Dorsolateral prefrontal cortex (tissue), 120 donors: ENCODE measurements at regions of chr1 and their contacts with region 1.

Region 1: DNA sequence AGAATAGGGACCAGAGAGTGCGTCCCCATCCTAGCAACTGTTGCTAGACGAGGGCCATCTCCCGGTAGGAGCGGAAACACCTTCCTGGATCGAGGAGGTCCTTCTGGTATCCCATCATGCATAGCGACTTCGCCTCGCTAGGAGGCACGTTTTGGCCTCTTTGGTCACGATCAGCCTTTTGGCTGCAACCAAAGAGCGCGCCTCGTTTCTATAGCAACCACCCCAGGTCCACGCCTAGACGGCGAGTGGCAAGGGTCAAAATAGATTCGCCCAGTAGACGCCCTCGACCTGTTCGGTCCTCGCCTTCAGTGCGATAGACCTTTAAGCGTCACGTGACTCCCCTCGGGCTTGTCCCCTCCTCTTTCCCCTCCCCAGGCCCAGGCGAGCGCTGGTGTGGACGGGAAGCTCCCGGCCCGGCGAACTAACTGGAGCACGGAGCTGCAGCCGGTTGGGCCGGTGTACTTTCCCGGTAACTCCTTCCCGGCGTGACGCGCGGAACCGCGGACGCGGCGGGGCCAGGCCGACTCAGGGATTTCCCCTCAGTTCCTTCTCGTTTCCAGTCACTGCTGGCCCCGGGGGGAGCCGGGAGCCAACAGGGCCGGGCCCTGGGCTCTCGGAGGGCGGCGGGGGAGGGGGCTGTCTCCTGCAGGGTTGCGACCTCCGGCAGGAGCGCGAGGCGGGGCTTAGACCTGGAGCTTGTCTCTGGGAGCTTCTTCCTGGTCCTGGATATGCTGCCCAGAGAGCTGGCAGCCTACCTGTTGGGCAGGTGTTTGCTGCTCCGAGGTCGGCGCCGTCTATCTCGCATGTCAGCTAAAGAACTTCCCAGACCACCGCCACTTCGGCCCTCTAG is at the start of gene DNAJC16:
- DNase-seq: peak; percentile 97 to 99 (median 99)
- H3K4me3 ChIP-seq: peak within 1 kb of the TSS; percentile 67 to 99 (median 89)
- H3K27ac ChIP-seq: peak within 1 kb of the TSS; percentile 81 to 100 (median 97)
- H3K27me3 ChIP-seq: no peaks in the 10 kb centered on the region
- CTCF ChIP-seq: peak in 50 of 56 donors; percentile 14 to 68 (median 44)
- total RNA-seq, gene DNAJC16: 25.1 to 54.7 (median 38.7) TPM

Region 2: DNA sequence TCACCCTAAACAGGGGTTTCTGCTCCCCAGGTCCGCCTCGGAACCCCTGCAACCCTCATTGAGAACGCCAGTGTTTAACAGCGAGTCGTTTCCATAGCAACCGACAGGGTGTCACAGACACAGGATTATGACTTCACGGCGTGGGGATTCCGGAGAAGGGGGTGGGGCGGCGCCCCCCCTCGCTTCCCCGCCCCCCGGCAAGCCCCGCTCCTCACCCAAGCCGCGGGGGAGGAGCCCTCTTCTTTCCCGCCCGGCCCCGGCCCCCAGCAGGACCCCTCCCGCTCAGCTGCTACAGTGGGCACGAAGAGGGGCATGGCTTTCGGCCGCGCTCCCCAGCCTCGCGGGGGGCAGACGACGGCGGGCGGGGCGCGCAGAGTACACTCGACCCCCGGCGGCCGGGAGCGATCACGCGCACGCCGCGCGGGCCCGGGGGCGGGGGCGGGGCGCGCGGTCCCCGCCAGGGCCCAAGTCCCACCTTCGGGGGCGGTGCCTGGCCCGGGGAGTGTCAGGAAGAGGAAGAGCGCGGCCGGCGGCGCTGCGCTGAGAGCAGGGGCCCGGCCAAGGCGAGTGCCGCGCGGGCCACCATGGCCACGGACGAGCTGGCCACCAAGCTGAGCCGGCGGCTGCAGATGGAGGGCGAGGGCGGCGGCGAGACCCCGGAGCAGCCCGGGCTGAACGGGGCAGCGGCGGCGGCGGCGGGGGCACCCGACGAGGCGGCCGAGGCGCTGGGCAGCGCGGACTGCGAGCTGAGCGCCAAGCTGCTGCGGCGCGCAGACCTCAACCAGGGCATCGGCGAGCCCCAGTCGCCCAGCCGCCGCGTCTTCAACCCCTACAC is 117.1 kb before region 1 on chr1 and contains the start of gene EFHD2:
- intact Hi-C with region 1: loop called in 1 of 2 experiments (anchors 10 kb)
- DNase-seq: peak in 6 of 10 donors; percentile 56 to 80 (median 72)
- H3K4me3 ChIP-seq: peak within 1 kb of the TSS; percentile 49 to 91 (median 78)
- H3K27ac ChIP-seq: peak within 1 kb of the TSS in 53 of 59 donors; percentile 14 to 91 (median 76)
- H3K27me3 ChIP-seq: no peaks in the 10 kb centered on the region
- CTCF ChIP-seq: peak in 5 of 56 donors; percentile 5 to 31 (median 25)
- total RNA-seq, gene EFHD2: 54.8 to 180 (median 104) TPM

Region 3: DNA sequence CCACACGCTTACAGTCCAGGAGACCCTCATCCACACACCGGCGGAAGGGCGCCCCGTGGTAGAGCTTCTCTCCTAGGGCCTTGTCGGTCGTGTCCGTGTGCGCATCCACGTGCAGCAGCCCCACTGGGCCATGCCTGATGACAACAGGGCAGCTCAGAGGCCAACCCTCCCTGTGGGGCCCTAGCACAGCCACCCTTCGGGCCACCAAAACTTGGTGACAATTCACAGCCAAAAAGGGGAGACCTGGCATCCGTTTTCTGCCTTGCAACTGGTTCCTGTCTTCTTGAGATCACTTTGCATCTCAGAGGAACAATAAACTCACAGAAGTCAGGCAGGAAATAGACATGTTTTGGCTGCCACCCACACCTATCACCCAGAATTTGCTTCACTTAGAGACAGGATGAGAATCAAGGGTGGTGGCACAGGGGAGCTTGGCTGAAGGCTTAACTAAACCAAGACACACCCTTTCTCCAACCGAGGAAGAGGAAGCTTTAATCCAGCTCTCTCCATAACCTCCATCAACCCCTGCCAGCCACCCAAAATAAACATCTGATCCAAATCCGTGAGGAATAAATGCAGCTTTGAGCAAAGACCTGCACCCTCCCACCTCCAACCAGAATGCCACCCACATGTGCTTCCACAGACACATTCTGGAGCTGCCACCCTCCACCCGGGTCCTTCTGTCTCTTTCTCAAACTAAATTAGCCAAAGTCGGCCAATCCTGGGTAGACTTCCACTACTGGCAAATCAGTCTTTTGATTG is 52.4 kb after region 1 on chr1:
- intact Hi-C with region 1: no loop called
- DNase-seq: peak in 5 of 10 donors; percentile 10 to 57 (median 49)
- H3K4me3 ChIP-seq: no peak overlapping the region
- H3K27ac ChIP-seq: peak overlapping the region in 46 of 59 donors; percentile 5 to 77 (median 52)
- H3K27me3 ChIP-seq: no peaks in the 10 kb centered on the region
- CTCF ChIP-seq: no peak

Region 4: DNA sequence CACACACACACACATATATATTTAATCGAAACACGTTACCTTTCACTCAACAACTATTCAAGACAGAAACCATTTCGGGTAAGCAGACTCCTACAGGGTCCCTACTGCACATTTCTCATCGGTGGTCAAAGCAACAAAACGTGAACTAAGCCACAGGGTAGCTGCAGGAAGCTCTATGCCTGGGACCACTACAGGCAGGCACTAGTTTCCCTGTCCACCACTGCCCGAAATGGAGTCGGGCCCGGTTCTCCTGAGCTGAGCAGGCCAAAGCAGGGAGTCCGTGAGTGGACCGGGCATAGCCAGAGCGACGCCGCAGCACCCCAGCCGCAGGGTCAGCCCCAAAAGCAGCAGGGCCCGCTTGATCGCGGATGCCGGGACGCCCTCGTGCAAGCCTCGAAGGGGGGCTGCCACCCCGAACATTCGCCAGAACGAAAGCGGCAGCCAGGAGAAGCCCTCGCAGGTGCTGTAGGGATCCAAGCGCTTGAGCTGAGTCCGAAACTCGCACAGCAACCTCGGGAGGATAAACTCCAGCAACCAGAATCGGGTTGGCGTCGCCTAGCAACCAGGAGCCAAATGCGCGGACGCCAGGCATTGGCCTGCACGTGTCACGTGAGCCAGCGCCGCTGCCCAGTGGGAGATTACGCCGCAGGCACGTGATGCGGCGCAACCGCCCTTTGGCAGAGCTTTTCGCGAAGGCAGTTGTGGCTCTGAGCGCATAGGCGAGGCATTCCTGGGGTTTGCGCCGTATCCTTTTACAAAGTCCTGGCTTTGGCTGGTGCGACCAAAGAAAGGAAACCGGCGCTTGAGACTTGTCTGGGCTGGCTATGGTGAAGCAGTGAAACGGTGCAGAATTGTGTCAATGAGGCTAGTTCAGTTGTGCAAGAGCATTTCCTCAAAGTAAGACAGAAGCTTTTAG is 76.6 kb after region 1 on chr1:
- intact Hi-C with region 1: loop called in 1 of 2 experiments (anchors 5 kb)
- DNase-seq: peak; percentile 97 to 98 (median 98)
- H3K4me3 ChIP-seq: peak overlapping the region; percentile 60 to 98 (median 87)
- H3K27ac ChIP-seq: peak overlapping the region in 58 of 59 donors; percentile 58 to 96 (median 86)
- H3K27me3 ChIP-seq: no peaks in the 10 kb centered on the region
- CTCF ChIP-seq: peak in 13 of 56 donors; percentile 1 to 38 (median 20)

Region 5: GRCh38 chr1:15617175-15617880 is 90.6 kb after region 1 on chr1 and contains the start of gene DDI2:
- intact Hi-C with region 1: loop called (anchors 2 to 5 kb)
- DNase-seq: peak; percentile 81 to 97 (median 92)
- H3K4me3 ChIP-seq: peak within 1 kb of the TSS; percentile 69 to 99 (median 94)
- H3K27ac ChIP-seq: peak within 1 kb of the TSS; percentile 49 to 97 (median 91)
- H3K27me3 ChIP-seq: no peaks in the 10 kb centered on the region
- CTCF ChIP-seq: peak in 20 of 56 donors; percentile 3 to 49 (median 16)
- total RNA-seq, gene DDI2: 28.6 to 49.9 (median 38.4) TPM

Region 6: GRCh38 chr1:15847100-15847892 is 320.6 kb after region 1 on chr1 and contains the start of gene SPEN:
- intact Hi-C with region 1: loop called in 1 of 2 experiments (anchors 5 kb)
- DNase-seq: peak; percentile 91 to 98 (median 96)
- H3K4me3 ChIP-seq: peak within 1 kb of the TSS; percentile 63 to 99 (median 91)
- H3K27ac ChIP-seq: peak within 1 kb of the TSS; percentile 88 to 99 (median 98)
- H3K27me3 ChIP-seq: no peaks in the 10 kb centered on the region
- CTCF ChIP-seq: peak in 22 of 56 donors; percentile 6 to 43 (median 22)
- total RNA-seq, gene SPEN: 64.4 to 134 (median 84.8) TPM

Region 7: GRCh38 chr1:16366722-16367257 is 840.1 kb after region 1 on chr1 and contains the start of gene SZRD1:
- intact Hi-C with region 1: loop called (anchors 10 kb)
- DNase-seq: peak; percentile 92 to 99 (median 96)
- H3K4me3 ChIP-seq: peak within 1 kb of the TSS; percentile 52 to 98 (median 90)
- H3K27ac ChIP-seq: peak within 1 kb of the TSS; percentile 80 to 100 (median 99)
- H3K27me3 ChIP-seq: no peaks in the 10 kb centered on the region
- CTCF ChIP-seq: peak in 4 of 56 donors; percentile 4 to 35 (median 9)
- total RNA-seq, gene SZRD1: 33.3 to 89.5 (median 49.3) TPM